ENCODE measurements at regions of chr17 and their contacts with region 1.

Region 1: DNA sequence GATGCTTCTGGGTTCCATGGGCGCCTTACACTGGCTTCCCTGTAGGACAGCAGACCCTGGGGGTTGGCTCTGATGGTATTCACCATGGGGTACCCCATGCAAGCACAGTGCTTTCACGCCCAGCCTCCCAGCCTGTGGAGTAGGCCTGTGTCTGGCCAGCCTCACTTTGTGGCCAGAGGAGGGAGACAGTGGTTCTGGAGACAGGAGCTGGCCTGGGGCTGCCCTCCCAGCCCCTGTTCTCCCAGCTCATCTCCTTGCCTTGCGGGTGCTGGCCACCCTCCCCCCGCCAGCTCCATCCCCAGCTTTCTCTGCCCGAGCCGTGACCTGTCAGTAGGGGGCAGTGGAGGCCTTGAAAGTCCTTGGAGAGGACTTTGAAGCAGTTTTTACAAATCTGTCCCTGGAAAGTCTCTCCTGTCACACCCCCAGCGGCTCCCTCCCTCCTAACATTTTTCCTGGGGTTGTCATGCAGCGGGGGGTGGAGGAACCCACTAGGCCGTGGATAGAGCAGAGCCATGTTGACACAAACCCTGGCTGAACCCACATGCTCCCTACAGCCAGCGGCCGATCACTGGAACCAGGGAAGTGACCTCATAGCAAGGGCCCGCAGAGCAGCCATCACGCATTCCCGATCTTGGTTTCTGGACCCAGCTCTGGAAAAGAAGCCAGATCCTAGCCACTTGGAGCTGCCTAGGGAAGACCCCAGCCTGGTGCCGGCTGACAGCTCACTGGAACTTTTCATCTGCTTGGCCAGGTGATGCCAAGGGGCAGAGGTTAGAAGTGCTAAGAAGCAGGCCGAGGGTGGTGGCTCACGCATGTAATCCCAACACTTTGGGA is 289.4 kb downstream of the SEC14L1 start:
- DNase-seq: peak; percentile 70 to 86 (median 74)
- H3K4me3 ChIP-seq: no peak overlapping the region
- H3K4me3 Mint-ChIP-seq: peak overlapping the region in 2 of 7 donors; percentile 8 to 27
- H3K27ac ChIP-seq: no peak overlapping the region
- H3K27ac Mint-ChIP-seq: peak overlapping the region; percentile 29 to 89 (median 72)
- H3K4me1 ChIP-seq: peaks cover 99% of the 10 kb centered on the region
- H3K4me1 Mint-ChIP-seq: peaks cover 70 to 98% (median 80%) of the 10 kb centered on the region in 3 donors
- H3K27me3 ChIP-seq: no peaks in the 10 kb centered on the region
- H3K27me3 Mint-ChIP-seq: no peaks in the 10 kb centered on the region

Region 2: DNA sequence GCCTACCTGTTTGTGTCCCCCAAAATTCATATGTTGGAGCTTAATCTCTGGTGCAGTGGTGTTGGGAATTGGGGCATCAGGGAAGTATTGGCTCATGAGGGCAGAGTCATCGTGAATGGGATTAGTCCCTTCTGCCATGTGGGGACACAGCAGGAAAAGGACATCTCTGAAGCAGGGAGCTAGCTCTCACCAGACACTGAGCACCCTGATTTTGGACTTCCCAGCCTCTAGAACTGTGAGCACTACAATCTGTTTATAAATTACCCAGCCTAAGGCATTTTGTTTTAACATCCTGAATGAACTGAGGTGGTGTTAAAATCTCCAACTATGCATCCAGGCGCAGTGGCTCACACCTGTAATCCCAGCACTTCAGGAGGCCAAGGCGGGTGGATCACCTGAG is 83.4 kb before region 1 on chr17:
- CTCF ChIA-PET with region 1: no interaction called
- POLR2A ChIA-PET with region 1: no interaction called
- DNase-seq: no peak
- H3K4me3 ChIP-seq: no peak overlapping the region
- H3K4me3 Mint-ChIP-seq: no peak overlapping the region
- H3K27ac ChIP-seq: no peak overlapping the region
- H3K27ac Mint-ChIP-seq: peak overlapping the region in 1 of 8 donors; percentile 23
- H3K4me1 ChIP-seq: peaks cover 42% of the 10 kb centered on the region
- H3K4me1 Mint-ChIP-seq: peaks cover 44 to 67% (median 64%) of the 10 kb centered on the region in 3 donors
- H3K27me3 ChIP-seq: no peaks in the 10 kb centered on the region
- H3K27me3 Mint-ChIP-seq: no peaks in the 10 kb centered on the region

Region 3: GRCh38 chr17:77372444-77373298 is 57.5 kb before region 1 on chr17:
- CTCF ChIA-PET with region 1: interaction called, 10 read pairs
- POLR2A ChIA-PET with region 1: interaction called, 5 read pairs
- DNase-seq: peak; percentile 55 to 76 (median 65)
- H3K4me3 ChIP-seq: peak overlapping the region; percentile 77
- H3K4me3 Mint-ChIP-seq: peak overlapping the region; percentile 80 to 93 (median 82)
- H3K27ac ChIP-seq: peak overlapping the region; percentile 82
- H3K27ac Mint-ChIP-seq: peak overlapping the region; percentile 79 to 95 (median 88)
- H3K4me1 ChIP-seq: peaks cover 70% of the 10 kb centered on the region
- H3K4me1 Mint-ChIP-seq: peaks cover 56 to 71% (median 67%) of the 10 kb centered on the region in 3 donors
- H3K27me3 ChIP-seq: no peaks in the 10 kb centered on the region
- H3K27me3 Mint-ChIP-seq: no peaks in the 10 kb centered on the region

Region 4: DNA sequence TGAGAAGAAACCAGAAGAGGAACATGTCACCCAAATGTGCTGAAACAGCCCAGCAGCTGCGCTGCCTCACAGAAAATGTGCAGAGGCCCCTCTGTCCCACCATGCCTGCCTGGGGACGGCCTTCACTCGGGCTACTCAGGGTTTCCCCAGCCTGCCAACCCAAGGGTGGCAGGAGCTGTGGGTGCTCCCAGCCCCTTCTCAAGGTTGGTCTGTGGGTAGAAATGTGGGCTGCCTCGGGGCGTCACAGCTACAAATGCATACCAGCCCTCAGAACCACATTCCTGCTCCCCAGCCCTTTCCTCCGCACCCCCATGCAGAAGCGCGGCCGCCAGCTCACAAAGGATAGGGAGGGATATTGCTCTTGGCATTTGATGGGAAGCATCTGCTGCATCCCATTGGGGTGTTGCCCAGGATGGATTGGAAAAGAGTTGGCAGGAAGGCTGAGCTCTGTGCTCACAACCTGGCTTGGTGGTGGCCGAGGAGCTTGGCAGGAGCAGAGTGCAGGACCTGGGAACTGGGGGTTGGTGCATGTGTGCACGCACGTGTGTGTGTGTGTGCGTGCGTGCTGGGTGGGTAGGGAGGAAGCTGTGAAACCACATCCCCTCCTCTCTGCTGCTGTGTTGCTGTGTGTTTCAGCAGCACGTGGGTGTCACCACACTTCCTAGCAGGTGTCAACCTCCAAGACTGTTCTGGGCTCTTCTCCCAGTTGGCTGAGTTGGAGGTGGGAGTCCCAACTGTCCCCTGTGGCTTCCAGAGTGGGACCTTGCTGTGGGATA is 15.0 kb after region 1 on chr17:
- CTCF ChIA-PET with region 1: interaction called, 74 read pairs
- POLR2A ChIA-PET with region 1: interaction called, 12 read pairs
- DNase-seq: peak; percentile 72 to 96 (median 94)
- H3K4me3 ChIP-seq: peak overlapping the region; percentile 66
- H3K4me3 Mint-ChIP-seq: peak overlapping the region; percentile 68 to 84 (median 81)
- H3K27ac ChIP-seq: peak overlapping the region; percentile 71
- H3K27ac Mint-ChIP-seq: peak overlapping the region; percentile 87 to 100 (median 98)
- H3K4me1 ChIP-seq: peaks cover 100% of the 10 kb centered on the region
- H3K4me1 Mint-ChIP-seq: peaks cover 89 to 97% (median 97%) of the 10 kb centered on the region in 3 donors
- H3K27me3 ChIP-seq: no peaks in the 10 kb centered on the region
- H3K27me3 Mint-ChIP-seq: peaks cover 0 to 5% of the 10 kb centered on the region in 2 donors

Region 5: GRCh38 chr17:77465358-77466041 is 35.4 kb after region 1 on chr17:
- CTCF ChIA-PET with region 1: interaction called, 7 read pairs
- POLR2A ChIA-PET with region 1: interaction called, 10 read pairs
- DNase-seq: peak; percentile 56 to 88 (median 81)
- H3K4me3 ChIP-seq: peak overlapping the region; percentile 59
- H3K4me3 Mint-ChIP-seq: peak overlapping the region; percentile 41 to 90 (median 84)
- H3K27ac ChIP-seq: peak overlapping the region; percentile 27
- H3K27ac Mint-ChIP-seq: peak overlapping the region; percentile 81 to 98 (median 93)
- H3K4me1 ChIP-seq: peaks cover 93% of the 10 kb centered on the region
- H3K4me1 Mint-ChIP-seq: peaks cover 78 to 97% (median 88%) of the 10 kb centered on the region in 3 donors
- H3K27me3 ChIP-seq: no peaks in the 10 kb centered on the region
- H3K27me3 Mint-ChIP-seq: peaks cover 0 to 6% of the 10 kb centered on the region in 2 donors

Region 6: GRCh38 chr17:77494664-77495435 is 64.7 kb after region 1 on chr17:
- CTCF ChIA-PET with region 1: interaction called, 62 read pairs
- POLR2A ChIA-PET with region 1: interaction called, 8 read pairs
- DNase-seq: peak; percentile 64 to 81 (median 72)
- H3K4me3 ChIP-seq: no peak overlapping the region
- H3K4me3 Mint-ChIP-seq: peak overlapping the region in 1 of 7 donors; percentile 12
- H3K27ac ChIP-seq: no peak overlapping the region
- H3K27ac Mint-ChIP-seq: peak overlapping the region; percentile 75 to 96 (median 86)
- H3K4me1 ChIP-seq: peaks cover 17% of the 10 kb centered on the region
- H3K4me1 Mint-ChIP-seq: peaks cover 19 to 40% (median 24%) of the 10 kb centered on the region in 3 donors
- H3K27me3 ChIP-seq: no peaks in the 10 kb centered on the region
- H3K27me3 Mint-ChIP-seq: no peaks in the 10 kb centered on the region